HepG2 (cell line): ENCODE measurements at regions of chr10 and their contacts with region 1.

Region 1: GRCh38 chr10:94315024-94315451 is 47.7 kb downstream of the NOC3L start:
- DNase-seq: peak; percentile 65
- ATAC-seq: peak; percentile 77
- H3K4me3 ChIP-seq: peak overlapping the region in 1 of 3 experiments; percentile 40; a peak in 1 of 6 replicates
- H3K27ac ChIP-seq: peak overlapping the region; percentile 68
- H3K4me1 ChIP-seq: peaks cover 37% of the 10 kb centered on the region
- H3K27me3 ChIP-seq: no peaks in the 10 kb centered on the region; a peak in 1 of 5 replicates
- CTCF ChIP-seq: peak; percentile 50
- EP300 ChIP-seq: no peak; a peak in 1 of 4 replicates
- POLR2A ChIP-seq: no peak
- RAD21 ChIP-seq: no peak

Region 2: GRCh38 chr10:93916257-93917063 is 398.6 kb before region 1 on chr10:
- CTCF ChIA-PET with region 1: interaction called, 15 read pairs
- POLR2A ChIA-PET with region 1: no interaction called
- in situ Hi-C with region 1: loop called (anchors 5 kb)
- intact Hi-C with region 1: loop called (anchors 1 kb)
- DNase-seq: peak; percentile 34
- ATAC-seq: peak; percentile 77
- H3K4me3 ChIP-seq: peak overlapping the region in 2 of 3 experiments; percentile 9 to 42; a peak in 2 of 6 replicates
- H3K27ac ChIP-seq: no peak overlapping the region
- H3K4me1 ChIP-seq: peaks cover 10% of the 10 kb centered on the region; the same call in 1 of the 2 replicates
- H3K27me3 ChIP-seq: no peaks in the 10 kb centered on the region; a peak in 1 of 5 replicates
- CTCF ChIP-seq: peak; percentile 68
- EP300 ChIP-seq: no peak
- POLR2A ChIP-seq: no peak
- RAD21 ChIP-seq: no peak

Region 3: DNA sequence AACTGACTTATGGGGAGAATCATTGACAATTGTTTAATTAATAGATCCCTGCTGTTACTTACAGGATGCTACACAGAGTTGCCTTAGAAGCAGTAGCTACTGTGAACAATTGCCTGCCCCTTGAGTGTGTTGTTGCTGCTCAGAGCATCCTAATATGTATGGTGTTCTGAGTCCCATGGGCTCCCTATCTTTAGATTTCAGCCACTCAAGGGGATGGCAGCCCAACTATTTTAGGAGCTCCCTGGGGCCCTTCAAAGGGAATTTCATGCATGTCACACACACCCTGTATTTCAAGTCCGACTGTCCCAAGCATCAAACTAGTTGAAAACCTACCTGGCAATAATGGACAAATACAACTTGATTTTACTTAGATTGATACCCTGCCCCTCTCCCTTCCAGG is 63.5 kb before region 1 on chr10:
- CTCF ChIA-PET with region 1: no interaction called
- POLR2A ChIA-PET with region 1: no interaction called
- in situ Hi-C with region 1: no loop called
- intact Hi-C with region 1: no loop called
- DNase-seq: no peak
- ATAC-seq: no peak
- H3K4me3 ChIP-seq: no peak overlapping the region
- H3K27ac ChIP-seq: no peak overlapping the region
- H3K4me1 ChIP-seq: no peaks in the 10 kb centered on the region
- H3K27me3 ChIP-seq: no peaks in the 10 kb centered on the region; a peak in 1 of 5 replicates
- CTCF ChIP-seq: no peak
- EP300 ChIP-seq: no peak
- POLR2A ChIP-seq: no peak
- RAD21 ChIP-seq: no peak

Region 4: DNA sequence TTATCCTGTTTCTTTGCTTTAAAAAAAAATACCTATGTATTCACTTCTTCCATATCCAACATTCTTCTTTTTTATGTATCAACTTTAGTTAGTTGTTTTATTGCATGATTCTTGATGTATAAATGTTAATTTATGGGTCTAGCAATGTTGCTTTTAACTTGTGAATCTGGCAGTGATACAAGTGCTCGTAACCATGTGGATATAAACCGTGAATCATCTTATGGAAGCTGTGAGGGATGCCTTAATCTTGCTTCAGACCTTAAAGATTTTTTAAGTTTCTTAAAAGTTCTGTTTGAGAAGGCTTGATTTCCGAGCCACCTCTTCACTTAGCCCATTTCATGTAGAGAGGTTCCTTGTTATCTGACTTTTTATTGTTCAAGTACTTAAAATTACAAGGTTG is 256.5 kb after region 1 on chr10:
- CTCF ChIA-PET with region 1: no interaction called
- POLR2A ChIA-PET with region 1: no interaction called
- in situ Hi-C with region 1: no loop called
- intact Hi-C with region 1: no loop called
- DNase-seq: no peak
- ATAC-seq: no peak
- H3K4me3 ChIP-seq: no peak overlapping the region
- H3K27ac ChIP-seq: no peak overlapping the region
- H3K4me1 ChIP-seq: no peaks in the 10 kb centered on the region
- H3K27me3 ChIP-seq: no peaks in the 10 kb centered on the region
- CTCF ChIP-seq: no peak
- EP300 ChIP-seq: no peak
- POLR2A ChIP-seq: no peak
- RAD21 ChIP-seq: no peak